Mammary epithelial cell (primary cell): ENCODE measurements at regions of chr1 and their contacts with region 1.

Region 1: GRCh38 chr1:121519042-121519755 is 334.4 kb downstream of the SRGAP2C start:
- DNase-seq: peak; percentile 68
- H3K4me3 ChIP-seq: peak overlapping the region; percentile 52 to 63 (median 60)
- H3K27ac ChIP-seq: no peak overlapping the region
- H3K4me1 ChIP-seq: peaks cover 8% of the 10 kb centered on the region
- H3K27me3 ChIP-seq: no peaks in the 10 kb centered on the region
- CTCF ChIP-seq: no peak

Region 2: DNA sequence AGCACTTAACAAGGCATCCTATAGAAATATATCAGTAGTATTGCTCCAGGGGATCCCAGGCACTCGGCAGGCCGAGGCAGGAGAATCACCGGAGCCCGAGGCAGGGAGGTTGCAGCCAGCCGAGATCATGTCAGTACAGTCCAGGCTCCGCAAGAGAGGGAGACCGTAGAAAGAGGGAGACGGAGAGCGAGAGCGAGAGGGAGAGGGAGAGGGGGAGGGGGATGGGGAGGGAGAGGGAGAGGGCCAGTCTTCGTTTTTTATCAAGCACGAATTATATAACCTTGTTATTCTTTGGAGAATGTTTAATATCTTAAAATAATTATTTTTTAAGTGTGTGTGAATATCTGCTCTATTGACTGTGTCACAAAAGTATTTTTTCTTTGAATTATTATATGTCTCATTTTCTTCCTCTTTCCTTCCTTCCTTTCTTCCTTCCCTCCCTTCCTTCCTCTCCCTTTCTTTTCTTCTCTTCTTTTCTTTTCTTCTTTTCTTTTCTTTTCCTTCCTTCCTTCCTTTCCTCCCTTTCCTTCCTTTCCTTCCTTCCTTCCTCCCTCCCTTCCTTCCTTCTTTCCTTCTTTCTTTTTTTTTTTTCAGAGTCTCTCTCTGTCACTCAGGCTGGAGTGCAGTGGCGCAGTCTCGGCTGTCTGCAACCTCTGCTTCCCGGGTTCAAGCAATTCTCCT is 100.7 kb before region 1 on chr1:
- CTCF ChIA-PET with region 1: no interaction called
- dilution Hi-C with region 1: no loop called
- in situ Hi-C with region 1: no loop called
- intact Hi-C with region 1: no loop called
- DNase-seq: peak; percentile 33
- H3K4me3 ChIP-seq: no peak overlapping the region
- H3K27ac ChIP-seq: peak overlapping the region; percentile 58
- H3K4me1 ChIP-seq: peaks cover 11% of the 10 kb centered on the region
- H3K27me3 ChIP-seq: no peaks in the 10 kb centered on the region
- CTCF ChIP-seq: no peak

Region 3: DNA sequence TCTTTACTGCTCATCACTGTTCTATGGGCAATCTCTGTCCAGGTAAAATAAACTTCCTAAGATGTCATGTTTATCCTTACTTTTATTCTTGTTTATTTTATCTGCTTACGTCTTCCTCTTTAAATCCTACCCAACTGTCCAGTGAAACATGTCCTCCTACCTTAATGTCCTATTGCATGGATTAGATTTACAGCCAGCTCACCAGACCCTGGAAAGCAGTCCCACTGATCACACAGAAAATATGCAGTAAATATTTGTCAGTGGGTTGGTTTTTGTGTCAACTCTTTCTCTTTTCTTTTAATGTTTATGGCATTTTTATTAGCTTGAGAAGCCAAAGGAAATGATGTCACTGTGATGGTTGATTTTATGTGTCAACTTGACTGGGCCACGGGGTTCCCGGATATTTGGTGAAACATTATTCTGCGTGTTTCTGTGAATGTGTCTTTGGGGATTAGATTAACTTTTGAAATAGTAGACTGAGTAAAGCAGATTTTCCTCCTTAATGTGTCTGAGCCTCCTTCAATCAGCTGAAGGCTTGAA is 76.1 kb before region 1 on chr1:
- CTCF ChIA-PET with region 1: no interaction called
- dilution Hi-C with region 1: no loop called
- in situ Hi-C with region 1: no loop called
- intact Hi-C with region 1: loop called (anchors 10 kb)
- DNase-seq: no peak
- H3K4me3 ChIP-seq: no peak overlapping the region
- H3K27ac ChIP-seq: no peak overlapping the region
- H3K4me1 ChIP-seq: no peaks in the 10 kb centered on the region
- H3K27me3 ChIP-seq: no peaks in the 10 kb centered on the region
- CTCF ChIP-seq: no peak